ENCODE measurements at regions of chr3 and their contacts with region 1.

Region 1: DNA sequence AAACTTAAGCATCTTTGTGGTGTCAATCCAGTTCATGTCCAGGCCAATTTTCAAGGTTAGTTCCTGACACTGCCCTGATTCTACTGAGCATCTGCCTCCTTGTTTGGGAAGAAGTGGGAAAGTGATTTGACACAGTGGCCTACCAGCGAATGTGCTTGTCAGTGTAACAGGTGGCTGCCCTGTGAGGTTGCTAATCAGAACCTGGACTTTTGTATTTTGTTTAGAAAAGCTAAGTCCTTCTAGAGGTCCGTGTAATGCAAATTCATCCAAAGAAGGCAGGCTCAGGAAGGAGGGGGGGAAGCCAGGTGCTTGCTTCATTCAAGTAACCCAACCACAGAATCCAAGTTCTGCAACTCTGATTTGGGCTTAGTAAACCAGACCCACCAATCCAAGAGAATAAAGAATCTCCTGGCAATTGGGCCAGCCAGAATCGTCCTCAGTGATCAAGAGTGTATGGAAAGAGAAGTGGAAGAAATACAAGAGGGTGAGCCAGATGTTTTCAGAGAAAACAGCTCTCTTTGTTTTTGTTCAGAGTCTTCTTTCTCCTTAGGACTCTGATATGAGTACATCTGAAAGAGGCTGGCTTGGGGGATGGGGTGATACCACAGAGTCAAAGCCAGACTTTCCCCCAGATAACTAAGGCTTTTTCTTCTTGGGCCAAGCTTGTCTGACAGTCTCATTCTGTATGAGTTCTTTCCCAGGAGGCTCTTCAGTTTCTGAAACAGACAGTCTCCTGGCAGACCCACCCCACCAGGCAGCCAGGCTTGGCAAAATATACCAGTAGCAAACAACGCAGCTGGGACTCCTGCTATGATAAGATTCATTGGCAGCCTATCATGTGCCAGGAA is 508.9 kb upstream of the TBL1XR1 start:
- DNase-seq: no peak
- H3K4me3 ChIP-seq: no peak overlapping the region
- H3K27ac ChIP-seq: no peak overlapping the region
- H3K4me1 ChIP-seq: peaks cover 5% of the 10 kb centered on the region
- H3K27me3 ChIP-seq: no peaks in the 10 kb centered on the region
- CTCF ChIP-seq: no peak
- POLR2A ChIP-seq: no peak

Region 2: GRCh38 chr3:177690306-177690705 is 15.9 kb before region 1 on chr3:
- intact Hi-C with region 1: loop called (anchors 1 kb)
- DNase-seq: no peak
- H3K4me3 ChIP-seq: no peak overlapping the region
- H3K27ac ChIP-seq: no peak overlapping the region
- H3K4me1 ChIP-seq: peaks cover 14% of the 10 kb centered on the region
- H3K27me3 ChIP-seq: no peaks in the 10 kb centered on the region
- CTCF ChIP-seq: no peak
- POLR2A ChIP-seq: no peak

Region 3: DNA sequence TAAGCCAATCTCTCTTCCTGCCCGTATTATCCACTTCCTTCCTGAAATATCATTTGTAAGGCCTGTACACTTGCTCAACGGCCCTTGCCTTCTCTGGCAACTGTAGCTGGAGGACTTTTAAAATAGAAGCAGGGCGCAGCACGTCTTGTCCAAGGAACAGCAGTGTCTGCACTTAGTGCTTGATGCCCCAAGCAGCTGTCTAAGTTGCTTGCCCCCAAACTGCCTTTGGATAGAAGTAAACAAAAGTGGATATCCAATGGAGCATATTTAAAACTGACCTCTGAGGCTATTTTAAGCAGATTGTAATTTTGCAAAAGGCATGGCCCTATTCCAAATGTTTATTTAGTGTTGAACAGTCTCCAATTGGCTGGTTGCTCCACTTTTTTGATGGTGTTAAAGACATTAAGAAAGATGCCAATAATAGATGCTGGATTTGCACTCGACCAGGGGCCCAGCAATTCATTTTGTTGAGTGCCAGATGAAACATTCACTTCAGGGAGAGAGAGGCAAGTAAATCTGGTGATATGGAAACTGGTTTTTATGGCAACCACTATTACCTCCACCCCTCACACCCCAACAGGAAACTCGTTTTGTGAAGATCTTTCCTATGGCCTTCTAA is 17.9 kb after region 1 on chr3:
- intact Hi-C with region 1: no loop called
- DNase-seq: no peak
- H3K4me3 ChIP-seq: no peak overlapping the region
- H3K27ac ChIP-seq: peak overlapping the region; percentile 13
- H3K4me1 ChIP-seq: peaks cover 30% of the 10 kb centered on the region
- H3K27me3 ChIP-seq: no peaks in the 10 kb centered on the region
- CTCF ChIP-seq: no peak
- POLR2A ChIP-seq: no peak

Region 4: GRCh38 chr3:177824190-177824786 is 118.1 kb after region 1 on chr3:
- intact Hi-C with region 1: loop called (anchors 1 kb)
- DNase-seq: peak in 1 of 2 donors; percentile 92
- H3K4me3 ChIP-seq: no peak overlapping the region
- H3K27ac ChIP-seq: peak overlapping the region; percentile 69
- H3K4me1 ChIP-seq: peaks cover 45% of the 10 kb centered on the region
- H3K27me3 ChIP-seq: no peaks in the 10 kb centered on the region
- CTCF ChIP-seq: no peak
- POLR2A ChIP-seq: no peak